ENCODE measurements at regions of chr4 and their contacts with region 1.

Region 1: GRCh38 chr4:88456757-88457306 is at the start of gene HERC5:
- DNase-seq: peak; percentile 98
- H3K4me3 Mint-ChIP-seq: peak within 1 kb of the TSS; percentile 93
- H3K27ac Mint-ChIP-seq: peak within 1 kb of the TSS; percentile 100
- H3K4me1 Mint-ChIP-seq: peaks cover 47% of the 10 kb centered on the region
- H3K27me3 Mint-ChIP-seq: no peaks in the 10 kb centered on the region
- total RNA-seq, gene HERC5: 18.1 and 19.7 TPM in 2 replicates

Region 2: GRCh38 chr4:88007304-88008121 is 449.3 kb before region 1 on chr4 and contains the start of gene PKD2:
- intact Hi-C with region 1: loop called (anchors 5 kb)
- DNase-seq: peak; percentile 96
- H3K4me3 Mint-ChIP-seq: peak within 1 kb of the TSS; percentile 94
- H3K27ac Mint-ChIP-seq: peak within 1 kb of the TSS; percentile 88
- H3K4me1 Mint-ChIP-seq: peaks cover 31% of the 10 kb centered on the region
- H3K27me3 Mint-ChIP-seq: peaks cover 16% of the 10 kb centered on the region
- total RNA-seq, gene PKD2: 10.1 and 12.3 TPM in 2 replicates

Region 3: GRCh38 chr4:88320780-88321373 is 136.0 kb before region 1 on chr4:
- intact Hi-C with region 1: loop called (anchors 2 kb)
- DNase-seq: peak; percentile 84
- H3K4me3 Mint-ChIP-seq: peak overlapping the region; percentile 77
- H3K27ac Mint-ChIP-seq: peak overlapping the region; percentile 92
- H3K4me1 Mint-ChIP-seq: peaks cover 20% of the 10 kb centered on the region
- H3K27me3 Mint-ChIP-seq: no peaks in the 10 kb centered on the region

Region 4: GRCh38 chr4:88411473-88412096 is 45.2 kb before region 1 on chr4:
- intact Hi-C with region 1: loop called (anchors 5 kb)
- DNase-seq: no peak
- H3K4me3 Mint-ChIP-seq: no peak overlapping the region
- H3K27ac Mint-ChIP-seq: no peak overlapping the region
- H3K4me1 Mint-ChIP-seq: peaks cover 11% of the 10 kb centered on the region
- H3K27me3 Mint-ChIP-seq: no peaks in the 10 kb centered on the region

Region 5: GRCh38 chr4:88489100-88489761 is 32.4 kb after region 1 on chr4:
- intact Hi-C with region 1: loop called (anchors 1 kb)
- DNase-seq: no peak
- H3K4me3 Mint-ChIP-seq: peak overlapping the region; percentile 20
- H3K27ac Mint-ChIP-seq: peak overlapping the region; percentile 82
- H3K4me1 Mint-ChIP-seq: peaks cover 20% of the 10 kb centered on the region
- H3K27me3 Mint-ChIP-seq: no peaks in the 10 kb centered on the region

Measured in activated CD4-positive, alpha-beta T cell treated with anti-CD3 and anti-CD28 coated beads, Interleukin-2, amount 10 ng/mL, durations not matched to agents 24 days and 14 days (primary cell).